CD4-positive, alpha-beta memory T cell (primary cell): ENCODE measurements at regions of chr11 and their contacts with region 1.

Region 1: DNA sequence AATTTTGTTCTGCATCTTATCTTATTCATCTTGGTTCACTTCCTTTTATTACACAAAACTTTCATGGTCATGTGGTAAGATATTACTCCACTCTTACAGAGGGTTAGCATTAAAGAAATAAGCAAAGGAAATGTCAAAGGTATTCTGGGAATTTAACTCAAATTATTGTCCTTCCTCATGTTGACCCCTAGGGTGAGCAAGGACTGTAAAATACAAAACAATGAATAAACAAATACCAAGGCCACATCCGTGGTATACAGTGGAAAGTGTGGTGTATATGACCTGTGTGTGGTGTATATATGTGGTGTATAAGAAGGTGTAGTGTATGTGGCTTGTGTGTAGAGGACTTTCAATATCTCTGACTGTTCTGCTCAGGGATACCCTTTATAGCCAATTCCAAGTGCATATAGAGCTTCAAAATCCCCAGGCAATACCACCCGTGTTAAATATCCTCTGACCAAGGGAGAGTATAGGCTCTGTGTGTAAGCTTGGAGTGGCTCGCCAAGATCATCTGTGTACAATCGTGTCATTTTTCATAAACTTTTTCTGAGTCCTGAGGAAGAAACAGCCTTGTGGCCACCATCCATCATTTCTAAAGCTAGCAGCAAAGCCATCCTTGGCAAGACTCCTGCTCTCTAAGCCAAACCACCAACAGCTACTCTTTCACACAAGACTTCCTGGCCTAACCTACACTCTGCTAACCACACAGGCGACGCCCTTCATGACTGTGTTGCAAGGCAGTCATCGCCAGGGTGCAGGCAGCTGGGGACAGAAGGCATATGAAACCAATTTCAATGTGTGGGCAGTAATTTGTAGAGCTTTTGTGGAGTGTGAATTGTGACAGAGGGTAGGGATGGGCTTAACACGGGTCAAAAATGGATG is 548.0 kb downstream of the ETS1 start:
- DNase-seq: peak; percentile 79 to 90 (median 83)
- H3K4me3 ChIP-seq: peak overlapping the region; percentile 18 to 43
- H3K4me3 Mint-ChIP-seq: peak overlapping the region in 2 of 8 donors; percentile 81 to 86
- H3K27ac ChIP-seq: peak overlapping the region; percentile 45
- H3K27ac Mint-ChIP-seq: peak overlapping the region in 5 of 7 donors; percentile 90 to 96 (median 93)
- H3K4me1 ChIP-seq: peaks cover 90% of the 10 kb centered on the region
- H3K4me1 Mint-ChIP-seq: peaks cover 32 to 47% (median 41%) of the 10 kb centered on the region in 4 donors
- H3K27me3 ChIP-seq: no peaks in the 10 kb centered on the region
- H3K27me3 Mint-ChIP-seq: no peaks in the 10 kb centered on the region

Region 2: DNA sequence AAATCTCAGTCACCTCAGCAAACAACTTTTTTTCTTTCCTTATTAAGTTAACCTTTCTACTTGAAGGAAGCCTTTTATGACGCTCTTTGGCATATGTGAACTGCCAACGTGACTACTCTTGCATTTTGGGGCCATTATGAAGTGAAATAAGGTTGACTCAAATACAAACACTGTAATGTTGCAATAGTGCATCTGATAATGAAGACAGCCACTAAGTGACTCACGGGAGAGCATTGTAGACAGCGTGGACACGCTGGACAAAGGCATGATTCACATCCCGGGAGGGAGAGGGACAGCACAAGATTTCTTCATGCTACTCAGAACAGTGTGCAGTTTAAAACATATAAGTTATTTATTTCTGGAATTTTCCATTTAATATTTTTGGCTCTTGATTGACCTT is 12.8 kb before region 1 on chr11:
- CTCF ChIA-PET with region 1: interaction called, 17 read pairs
- POLR2A ChIA-PET with region 1: interaction called, 9 read pairs
- intact Hi-C with region 1: no loop called
- DNase-seq: no peak
- H3K4me3 ChIP-seq: no peak overlapping the region
- H3K4me3 Mint-ChIP-seq: no peak overlapping the region
- H3K27ac ChIP-seq: no peak overlapping the region
- H3K27ac Mint-ChIP-seq: no peak overlapping the region
- H3K4me1 ChIP-seq: no peaks in the 10 kb centered on the region
- H3K4me1 Mint-ChIP-seq: peaks cover 0 to 4% (median 1%) of the 10 kb centered on the region in 4 donors
- H3K27me3 ChIP-seq: no peaks in the 10 kb centered on the region
- H3K27me3 Mint-ChIP-seq: peaks cover 3 to 4% of the 10 kb centered on the region in 2 donors

Region 3: GRCh38 chr11:128086794-128087193 is 47.4 kb after region 1 on chr11:
- CTCF ChIA-PET with region 1: interaction called, 36 read pairs
- POLR2A ChIA-PET with region 1: interaction called, 33 read pairs
- intact Hi-C with region 1: loop called (anchors 1 kb)
- DNase-seq: peak in 1 of 5 donors; percentile 10
- H3K4me3 ChIP-seq: no peak overlapping the region
- H3K4me3 Mint-ChIP-seq: peak overlapping the region in 3 of 8 donors; percentile 31 to 53 (median 44)
- H3K27ac ChIP-seq: no peak overlapping the region
- H3K27ac Mint-ChIP-seq: peak overlapping the region in 6 of 7 donors; percentile 8 to 68 (median 25)
- H3K4me1 ChIP-seq: peaks cover 20% of the 10 kb centered on the region
- H3K4me1 Mint-ChIP-seq: peaks cover 30 to 52% (median 41%) of the 10 kb centered on the region in 4 donors
- H3K27me3 ChIP-seq: no peaks in the 10 kb centered on the region
- H3K27me3 Mint-ChIP-seq: no peaks in the 10 kb centered on the region

Region 4: GRCh38 chr11:128472128-128473089 is 433.0 kb after region 1 on chr11:
- CTCF ChIA-PET with region 1: no interaction called
- POLR2A ChIA-PET with region 1: interaction called, 4 read pairs
- intact Hi-C with region 1: loop called (anchors 10 kb)
- DNase-seq: peak in 4 of 5 donors; percentile 51 to 82 (median 57)
- H3K4me3 ChIP-seq: peak overlapping the region; percentile 5 to 27
- H3K4me3 Mint-ChIP-seq: peak overlapping the region; percentile 70 to 93 (median 84)
- H3K27ac ChIP-seq: peak overlapping the region; percentile 94
- H3K27ac Mint-ChIP-seq: peak overlapping the region; percentile 98 to 99 (median 99)
- H3K4me1 ChIP-seq: peaks cover 100% of the 10 kb centered on the region
- H3K4me1 Mint-ChIP-seq: peaks cover 85 to 98% (median 92%) of the 10 kb centered on the region in 4 donors
- H3K27me3 ChIP-seq: no peaks in the 10 kb centered on the region
- H3K27me3 Mint-ChIP-seq: no peaks in the 10 kb centered on the region

Region 5: DNA sequence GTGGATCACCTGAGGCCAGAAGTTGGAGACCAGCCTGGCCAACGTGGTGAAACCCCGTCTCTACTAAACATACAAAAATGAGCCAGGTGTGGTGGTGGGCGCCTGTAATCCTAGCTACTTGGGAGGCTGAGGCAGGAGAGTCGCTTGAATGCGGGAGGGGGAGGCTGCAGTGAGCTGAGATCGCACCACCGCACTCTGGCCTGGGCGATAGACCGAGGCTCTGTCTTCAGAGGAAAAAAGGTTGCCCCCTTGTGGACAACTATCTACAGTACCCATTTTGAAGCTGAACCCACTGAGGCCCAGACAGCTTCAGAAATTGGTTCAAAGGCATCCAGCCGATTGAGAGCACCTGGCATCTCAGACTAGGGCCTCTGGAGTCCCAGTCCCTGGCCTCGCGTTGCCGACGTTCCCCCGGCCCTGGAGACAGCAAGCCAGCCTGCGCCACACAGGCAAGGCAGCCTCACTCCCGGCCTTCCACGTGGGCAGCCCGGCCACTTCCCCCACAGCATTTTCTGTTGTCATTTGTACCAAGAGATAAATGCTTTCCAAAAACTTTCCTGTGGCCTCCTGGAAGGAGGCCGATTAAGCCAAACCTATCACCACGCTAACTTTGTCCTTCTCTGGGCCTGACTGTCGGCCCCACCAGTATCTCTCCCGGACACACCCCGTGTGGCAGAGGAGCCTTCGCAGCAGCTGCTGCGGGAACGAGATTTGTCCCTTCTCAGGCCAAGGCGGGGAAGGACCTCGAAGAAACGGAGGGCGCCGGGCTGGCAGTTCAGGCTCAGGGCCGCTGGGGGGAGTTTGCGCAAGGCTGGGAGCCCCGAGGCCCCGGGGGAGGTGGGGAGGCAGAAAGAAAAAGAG is 737.3 kb after region 1 on chr11:
- CTCF ChIA-PET with region 1: no interaction called
- POLR2A ChIA-PET with region 1: interaction called, 3 read pairs
- intact Hi-C with region 1: loop called (anchors 5 kb)
- DNase-seq: peak; percentile 43 to 61 (median 56)
- H3K4me3 ChIP-seq: no peak overlapping the region
- H3K4me3 Mint-ChIP-seq: peak overlapping the region in 4 of 8 donors; percentile 21 to 63 (median 36)
- H3K27ac ChIP-seq: no peak overlapping the region
- H3K27ac Mint-ChIP-seq: peak overlapping the region; percentile 62 to 91 (median 81)
- H3K4me1 ChIP-seq: peaks cover 62% of the 10 kb centered on the region
- H3K4me1 Mint-ChIP-seq: peaks cover 56 to 93% (median 72%) of the 10 kb centered on the region in 4 donors
- H3K27me3 ChIP-seq: no peaks in the 10 kb centered on the region
- H3K27me3 Mint-ChIP-seq: no peaks in the 10 kb centered on the region

Region 6: GRCh38 chr11:129291546-129291945 is 1252.2 kb after region 1 on chr11:
- CTCF ChIA-PET with region 1: no interaction called
- POLR2A ChIA-PET with region 1: no interaction called
- intact Hi-C with region 1: no loop called
- DNase-seq: no peak
- H3K4me3 ChIP-seq: no peak overlapping the region
- H3K4me3 Mint-ChIP-seq: no peak overlapping the region
- H3K27ac ChIP-seq: no peak overlapping the region
- H3K27ac Mint-ChIP-seq: no peak overlapping the region
- H3K4me1 ChIP-seq: no peaks in the 10 kb centered on the region
- H3K4me1 Mint-ChIP-seq: no peaks in the 10 kb centered on the region
- H3K27me3 ChIP-seq: no peaks in the 10 kb centered on the region
- H3K27me3 Mint-ChIP-seq: peaks cover 19 to 32% of the 10 kb centered on the region in 2 donors